Tibial artery (tissue), 4 donors: ENCODE measurements at regions of chr1 and their contacts with region 1.

Region 1: GRCh38 chr1:240608707-240609106 is 3.2 kb downstream of the GREM2 start:
- DNase-seq: no peak
- H3K4me3 ChIP-seq: no peak overlapping the region
- H3K27ac ChIP-seq: no peak overlapping the region
- H3K4me1 ChIP-seq: peaks cover 0 to 11% (median 1%) of the 10 kb centered on the region in 4 donors
- H3K27me3 ChIP-seq: peaks cover 0 to 3% of the 10 kb centered on the region in 2 donors
- CTCF ChIP-seq: no peak

Region 2: DNA sequence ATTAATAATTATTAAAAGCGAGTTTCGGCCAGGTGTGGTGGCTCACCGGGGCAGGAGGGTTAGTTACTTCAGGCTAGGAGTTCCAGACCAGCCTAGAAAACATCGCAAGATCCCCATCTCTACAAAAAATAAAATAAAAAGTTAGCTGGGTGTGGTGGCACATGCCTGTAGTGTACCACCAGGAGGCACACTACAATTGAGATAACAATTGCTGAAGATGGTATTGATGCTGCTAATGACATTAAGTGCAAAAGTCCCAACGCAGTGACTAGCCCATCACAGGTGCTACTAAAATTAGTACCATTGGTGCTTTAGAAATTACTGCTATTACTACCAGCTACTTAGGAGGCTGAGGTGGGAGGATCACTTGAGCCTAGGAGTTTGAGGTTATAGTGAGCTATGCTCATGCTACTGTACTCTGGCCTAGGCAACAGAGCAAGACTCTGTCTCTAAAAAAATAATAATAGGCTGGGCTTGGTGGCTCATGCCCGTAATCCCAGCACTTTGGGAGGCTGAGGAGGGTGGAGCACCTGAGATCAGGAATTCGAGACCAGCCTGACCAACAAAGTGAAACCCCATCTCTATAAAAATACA is 153.4 kb before region 1 on chr1:
- intact Hi-C with region 1: loop called (anchors 5 kb)
- DNase-seq: no peak
- H3K4me3 ChIP-seq: no peak overlapping the region
- H3K27ac ChIP-seq: no peak overlapping the region
- H3K4me1 ChIP-seq: no peaks in the 10 kb centered on the region
- H3K27me3 ChIP-seq: no peaks in the 10 kb centered on the region
- CTCF ChIP-seq: no peak

Region 3: GRCh38 chr1:240465531-240465940 is 143.2 kb before region 1 on chr1:
- intact Hi-C with region 1: no loop called
- DNase-seq: no peak
- H3K4me3 ChIP-seq: no peak overlapping the region
- H3K27ac ChIP-seq: no peak overlapping the region
- H3K4me1 ChIP-seq: no peaks in the 10 kb centered on the region
- H3K27me3 ChIP-seq: no peaks in the 10 kb centered on the region
- CTCF ChIP-seq: no peak

Region 4: GRCh38 chr1:241688940-241689368 is 1080.2 kb after region 1 on chr1:
- intact Hi-C with region 1: no loop called
- DNase-seq: no peak
- H3K4me3 ChIP-seq: no peak overlapping the region
- H3K27ac ChIP-seq: no peak overlapping the region
- H3K4me1 ChIP-seq: no peaks in the 10 kb centered on the region
- H3K27me3 ChIP-seq: no peaks in the 10 kb centered on the region
- CTCF ChIP-seq: no peak